ENCODE measurements at regions of chr12 and their contacts with region 1.

Region 1: GRCh38 chr12:68290126-68290525 is 36.7 kb upstream of the IL22 start:
- DNase-seq: peak; percentile 58
- H3K4me3 Mint-ChIP-seq: no peak overlapping the region
- H3K27ac Mint-ChIP-seq: peak overlapping the region; percentile 59
- H3K4me1 Mint-ChIP-seq: peaks cover 47% of the 10 kb centered on the region
- H3K27me3 Mint-ChIP-seq: peaks cover 23% of the 10 kb centered on the region

Region 2: GRCh38 chr12:68240597-68241374 is 49.3 kb before region 1 on chr12:
- CTCF ChIA-PET with region 1: interaction called, 4 read pairs
- POLR2A ChIA-PET with region 1: interaction called, 3 read pairs
- intact Hi-C with region 1: loop called (anchors 1 kb)
- DNase-seq: peak; percentile 72
- H3K4me3 Mint-ChIP-seq: no peak overlapping the region
- H3K27ac Mint-ChIP-seq: peak overlapping the region; percentile 13
- H3K4me1 Mint-ChIP-seq: peaks cover 46% of the 10 kb centered on the region
- H3K27me3 Mint-ChIP-seq: peaks cover 12% of the 10 kb centered on the region

Region 3: DNA sequence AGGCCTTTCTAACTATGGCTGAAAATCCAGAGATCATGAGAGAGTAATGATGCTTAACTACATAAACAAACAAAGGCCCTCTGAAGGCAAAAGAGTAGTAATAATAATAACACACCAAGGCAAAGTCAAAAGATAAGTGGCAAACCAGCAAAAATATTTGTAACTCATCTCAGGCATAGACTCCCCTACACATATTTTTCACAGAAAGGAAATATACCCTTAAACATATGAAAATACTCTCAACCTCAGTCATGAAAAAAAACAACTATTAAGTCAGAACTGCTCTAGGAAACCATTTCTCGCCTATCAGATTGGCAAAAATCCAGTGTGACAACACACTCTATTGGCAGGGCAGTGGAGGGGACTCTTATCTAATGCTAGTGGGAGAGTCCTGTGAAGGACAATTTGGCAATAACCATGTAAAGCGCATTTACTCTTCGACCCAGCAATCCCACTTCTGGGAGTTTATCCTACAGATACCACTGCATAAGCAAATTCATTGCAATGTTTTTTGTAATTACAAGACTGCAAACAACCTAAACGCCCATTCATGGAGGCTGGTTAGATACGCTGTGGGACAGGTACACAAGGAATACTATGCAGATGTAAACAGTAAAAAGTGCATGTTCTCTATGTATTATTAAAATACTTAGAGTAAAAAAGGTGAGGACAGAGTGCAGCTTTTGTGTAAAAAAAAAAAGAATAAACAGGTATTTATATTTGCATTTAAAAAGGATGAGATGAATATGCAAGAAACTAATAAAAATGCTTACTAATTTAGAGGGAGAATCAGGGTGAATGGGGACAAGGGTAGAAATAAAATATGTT is 10.7 kb before region 1 on chr12:
- CTCF ChIA-PET with region 1: interaction called, 3 read pairs
- POLR2A ChIA-PET with region 1: interaction called, 25 read pairs
- intact Hi-C with region 1: loop called (anchors 1 kb)
- DNase-seq: no peak
- H3K4me3 Mint-ChIP-seq: no peak overlapping the region
- H3K27ac Mint-ChIP-seq: no peak overlapping the region
- H3K4me1 Mint-ChIP-seq: peaks cover 46% of the 10 kb centered on the region
- H3K27me3 Mint-ChIP-seq: peaks cover 30% of the 10 kb centered on the region

Region 4: DNA sequence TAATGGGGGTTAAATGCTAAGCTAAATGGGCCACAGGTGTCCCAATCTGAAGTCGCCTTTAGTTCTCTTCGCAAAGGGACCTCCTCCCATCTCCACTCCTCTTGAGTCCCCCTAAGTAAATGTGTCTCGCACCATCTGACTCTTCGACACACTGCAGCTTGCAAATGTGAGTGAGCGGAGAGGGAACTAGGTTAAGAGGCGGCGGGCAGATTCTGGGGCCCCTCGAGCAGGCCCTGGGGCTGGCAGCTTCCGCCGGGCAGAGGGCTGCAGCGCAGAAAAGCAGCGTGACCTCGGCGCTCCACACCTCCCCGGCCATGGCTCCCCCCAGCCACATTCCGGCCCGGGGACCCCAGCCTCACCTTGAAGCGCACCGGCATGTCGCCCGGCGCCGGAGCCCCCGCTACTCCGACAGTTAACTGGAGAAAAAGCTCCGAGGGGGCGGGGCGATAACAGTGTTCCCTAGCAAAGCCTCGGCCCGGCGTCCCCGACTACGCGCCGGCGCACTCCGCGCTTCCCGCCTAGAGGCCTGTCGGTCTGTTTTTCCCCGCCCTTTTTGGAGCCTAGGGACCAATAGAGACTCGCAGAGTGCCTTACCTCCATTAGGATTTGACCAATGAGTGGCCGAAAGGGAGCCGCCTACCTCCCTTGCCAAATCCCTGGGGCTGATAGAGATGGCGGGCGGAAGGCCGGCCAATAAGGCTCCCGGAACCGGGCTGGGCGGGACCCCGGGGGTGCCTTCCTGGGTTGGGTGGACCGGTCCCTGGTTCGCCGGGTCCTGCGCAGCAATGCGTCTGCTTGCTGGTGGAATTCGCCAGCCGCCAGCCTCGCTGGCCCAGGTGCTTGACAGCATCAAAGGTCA is 42.0 kb after region 1 on chr12 and contains the start of gene MDM1:
- CTCF ChIA-PET with region 1: interaction called, 3 read pairs
- POLR2A ChIA-PET with region 1: no interaction called
- intact Hi-C with region 1: loop called (anchors 1 kb)
- DNase-seq: peak; percentile 97
- H3K4me3 Mint-ChIP-seq: peak within 1 kb of the TSS; percentile 85
- H3K27ac Mint-ChIP-seq: peak within 1 kb of the TSS; percentile 71
- H3K4me1 Mint-ChIP-seq: peaks cover 31% of the 10 kb centered on the region
- H3K27me3 Mint-ChIP-seq: peaks cover 2% of the 10 kb centered on the region
- total RNA-seq, gene MDM1: 13.8 to 15.6 TPM

Region 5: DNA sequence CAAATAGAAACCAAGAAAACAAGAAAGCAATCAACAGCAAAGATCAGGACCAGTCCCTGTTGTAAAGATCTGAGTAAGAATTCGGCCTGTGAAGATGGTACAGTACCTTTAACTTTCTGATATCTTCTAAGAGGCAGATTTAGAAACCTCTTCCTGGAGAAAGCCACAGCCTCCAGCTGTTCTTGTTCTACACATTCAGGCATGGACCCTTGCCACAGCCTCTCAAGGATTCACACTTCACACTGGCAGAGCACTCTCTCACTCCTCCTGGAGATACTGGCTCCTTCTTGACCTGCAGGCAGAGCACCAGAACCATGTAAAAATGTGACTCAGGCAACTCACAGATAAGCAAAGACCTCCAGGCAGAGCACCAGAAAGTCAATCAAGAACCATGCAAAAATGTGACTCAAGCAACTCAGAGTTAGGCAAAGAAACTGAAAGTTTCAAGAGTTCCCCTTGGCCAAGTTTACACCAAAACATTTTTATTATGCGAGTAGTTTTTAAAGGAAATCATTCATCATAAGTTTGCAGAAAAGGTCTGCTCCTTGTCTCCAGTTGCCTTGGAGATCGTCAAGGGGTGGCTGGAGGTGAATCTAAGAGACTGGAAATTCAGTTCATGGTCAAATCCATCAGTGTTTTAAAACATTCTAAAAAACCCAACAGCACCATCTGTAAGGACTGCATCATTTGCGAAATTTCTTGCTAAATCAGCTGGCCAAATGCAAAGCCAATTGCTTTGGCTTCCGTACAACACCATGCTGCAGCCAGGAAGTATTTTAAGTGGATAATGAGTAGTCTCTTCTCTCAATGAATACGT is 161.3 kb after region 1 on chr12:
- CTCF ChIA-PET with region 1: interaction called, 3 read pairs
- POLR2A ChIA-PET with region 1: no interaction called
- intact Hi-C with region 1: loop called (anchors 1 kb)
- DNase-seq: peak; percentile 70
- H3K4me3 Mint-ChIP-seq: peak overlapping the region; percentile 33
- H3K27ac Mint-ChIP-seq: peak overlapping the region; percentile 95
- H3K4me1 Mint-ChIP-seq: peaks cover 85% of the 10 kb centered on the region
- H3K27me3 Mint-ChIP-seq: no peaks in the 10 kb centered on the region

Region 6: GRCh38 chr12:68505970-68506369 is 215.8 kb after region 1 on chr12:
- CTCF ChIA-PET with region 1: no interaction called
- POLR2A ChIA-PET with region 1: no interaction called
- intact Hi-C with region 1: no loop called
- DNase-seq: no peak
- H3K4me3 Mint-ChIP-seq: no peak overlapping the region
- H3K27ac Mint-ChIP-seq: no peak overlapping the region
- H3K4me1 Mint-ChIP-seq: peaks cover 9% of the 10 kb centered on the region
- H3K27me3 Mint-ChIP-seq: no peaks in the 10 kb centered on the region